Activated CD4-positive, alpha-beta T cell treated with anti-CD3 and anti-CD28 coated beads for 36 hours (primary cell): ENCODE measurements at regions of chr7 and their contacts with region 1.

Region 1: DNA sequence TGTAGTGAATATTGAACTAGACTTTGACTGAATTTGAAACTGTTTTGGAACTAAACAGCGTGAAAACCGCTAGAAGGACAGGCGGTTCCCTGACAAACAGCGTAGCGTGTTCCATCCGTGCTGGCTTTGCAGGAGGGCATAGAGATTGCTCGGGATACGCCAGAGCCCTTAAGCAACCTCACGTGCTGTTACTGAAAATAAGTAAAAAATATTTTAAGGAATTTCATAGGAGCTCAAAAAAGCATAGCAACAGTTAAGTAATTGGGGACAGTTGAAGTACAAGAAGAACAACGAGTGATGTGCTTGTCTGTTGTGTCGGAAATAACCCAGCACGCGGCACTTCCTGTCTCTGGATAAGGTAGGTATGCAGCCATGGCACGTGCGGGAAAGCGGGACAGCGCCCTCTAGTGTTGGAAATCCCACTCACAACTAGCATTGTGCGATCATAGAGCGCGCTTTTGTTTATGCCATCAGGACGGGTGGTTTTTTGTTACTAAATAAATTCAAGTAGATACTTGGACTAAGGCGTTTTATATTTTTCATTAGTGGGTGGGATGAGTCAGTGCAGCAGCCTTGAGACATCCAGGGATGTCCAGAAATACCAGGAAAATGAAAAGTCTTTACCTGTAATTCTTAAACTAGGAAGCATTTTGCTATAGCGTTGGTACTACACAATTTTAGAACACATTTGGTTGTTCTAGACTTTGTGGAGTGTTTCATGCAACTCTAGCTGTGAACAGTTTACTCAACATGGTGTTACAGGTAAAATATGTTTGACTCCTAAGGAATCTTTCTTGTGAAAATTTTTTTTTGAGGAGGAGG is 50.4 kb downstream of the DNAJB6 start:
- DNase-seq: peak; percentile 95
- ATAC-seq: peak; percentile 96
- H3K4me3 Mint-ChIP-seq: no peak overlapping the region
- H3K27ac Mint-ChIP-seq: peak overlapping the region; percentile 75
- H3K4me1 Mint-ChIP-seq: peaks cover 36% of the 10 kb centered on the region
- H3K27me3 Mint-ChIP-seq: no peaks in the 10 kb centered on the region

Region 2: DNA sequence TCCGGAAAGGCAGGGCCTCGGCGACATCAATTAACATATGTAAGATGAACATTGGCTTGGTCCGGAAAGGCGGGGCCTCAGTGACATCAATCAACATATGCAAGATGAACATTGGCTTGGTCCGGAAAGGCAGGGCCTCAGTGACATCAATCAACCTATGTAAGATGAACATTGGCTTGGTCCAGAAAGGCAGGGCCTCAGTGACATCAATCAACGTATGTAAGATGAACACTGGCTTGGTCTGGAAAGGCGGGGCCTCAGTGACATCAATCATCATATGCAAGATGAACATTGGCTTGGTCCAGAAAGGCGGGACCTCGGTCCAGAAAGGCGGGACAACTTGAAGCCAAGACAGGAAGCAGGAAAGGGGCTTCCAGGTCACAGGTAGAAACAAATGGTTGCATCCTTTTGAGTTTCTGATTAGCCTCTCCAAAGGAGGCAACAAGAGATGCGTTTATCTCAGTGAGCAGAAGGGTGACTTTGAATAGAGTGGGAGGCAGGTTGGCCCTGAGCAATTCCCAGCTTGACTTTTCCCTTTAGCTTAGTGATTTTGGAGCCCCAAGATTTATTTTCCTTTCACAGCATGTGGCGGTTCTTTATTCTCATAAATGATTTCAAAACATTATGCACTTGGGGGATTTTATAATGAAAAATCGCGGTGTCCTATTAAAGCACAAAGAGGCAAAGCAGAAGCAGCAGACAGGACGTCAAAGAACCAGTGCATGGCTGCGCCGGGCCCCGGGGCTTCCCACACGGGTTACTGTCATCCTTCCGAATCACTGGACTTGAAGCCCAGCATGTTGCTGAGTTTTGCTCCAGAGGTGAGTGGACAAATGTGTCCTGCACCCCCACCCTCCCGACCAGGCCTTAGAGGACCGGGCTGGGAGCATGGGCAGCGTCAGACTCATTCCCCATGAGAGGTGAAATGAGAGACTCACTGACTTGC is 1972.4 kb before region 1 on chr7:
- CTCF ChIA-PET with region 1: no interaction called
- POLR2A ChIA-PET with region 1: no interaction called
- intact Hi-C with region 1: no loop called
- DNase-seq: no peak
- ATAC-seq: no peak
- H3K4me3 Mint-ChIP-seq: no peak overlapping the region
- H3K27ac Mint-ChIP-seq: no peak overlapping the region
- H3K4me1 Mint-ChIP-seq: no peaks in the 10 kb centered on the region
- H3K27me3 Mint-ChIP-seq: peaks cover 14% of the 10 kb centered on the region

Region 3: GRCh38 chr7:157010588-157011332 is 376.4 kb before region 1 on chr7 and contains the start of gene MNX1:
- CTCF ChIA-PET with region 1: no interaction called
- POLR2A ChIA-PET with region 1: no interaction called
- intact Hi-C with region 1: no loop called
- DNase-seq: peak; percentile 73
- ATAC-seq: peak; percentile 83
- H3K4me3 Mint-ChIP-seq: peak within 1 kb of the TSS; percentile 39
- H3K27ac Mint-ChIP-seq: no peak within 1 kb of the TSS
- H3K4me1 Mint-ChIP-seq: peaks cover 15% of the 10 kb centered on the region
- H3K27me3 Mint-ChIP-seq: peaks cover 69% of the 10 kb centered on the region
- total RNA-seq, gene MNX1: not detected

Region 4: GRCh38 chr7:157273208-157274093 is 113.7 kb before region 1 on chr7:
- CTCF ChIA-PET with region 1: no interaction called
- POLR2A ChIA-PET with region 1: no interaction called
- intact Hi-C with region 1: loop called in 1 of 2 experiments (anchors 5 kb)
- DNase-seq: peak; percentile 81
- ATAC-seq: peak; percentile 84
- H3K4me3 Mint-ChIP-seq: no peak overlapping the region
- H3K27ac Mint-ChIP-seq: no peak overlapping the region
- H3K4me1 Mint-ChIP-seq: peaks cover 18% of the 10 kb centered on the region
- H3K27me3 Mint-ChIP-seq: peaks cover 2% of the 10 kb centered on the region

Region 5: GRCh38 chr7:157625973-157626742 is 239.0 kb after region 1 on chr7:
- CTCF ChIA-PET with region 1: no interaction called
- POLR2A ChIA-PET with region 1: no interaction called
- intact Hi-C with region 1: no loop called
- DNase-seq: no peak
- ATAC-seq: peak; percentile 27
- H3K4me3 Mint-ChIP-seq: peak overlapping the region; percentile 3
- H3K27ac Mint-ChIP-seq: peak overlapping the region; percentile 35
- H3K4me1 Mint-ChIP-seq: peaks cover 72% of the 10 kb centered on the region
- H3K27me3 Mint-ChIP-seq: no peaks in the 10 kb centered on the region